Activated CD8-positive, alpha-beta memory T cell treated with anti-CD3 and anti-CD28 coated beads, Interleukin-2, amount 10 ng/mL, durations not matched to agents 7 days and 5 days (primary cell): ENCODE measurements at regions of chr2 and their contacts with region 1.

Region 1: GRCh38 chr2:69724540-69725159 is 17.3 kb upstream of the ANXA4 start:
- DNase-seq: peak; percentile 90
- ATAC-seq: peak; percentile 95
- H3K4me3 Mint-ChIP-seq: peak overlapping the region; percentile 69
- H3K27ac Mint-ChIP-seq: no peak overlapping the region
- H3K4me1 Mint-ChIP-seq: peaks cover 8% of the 10 kb centered on the region
- H3K27me3 Mint-ChIP-seq: peaks cover 3% of the 10 kb centered on the region

Region 2: DNA sequence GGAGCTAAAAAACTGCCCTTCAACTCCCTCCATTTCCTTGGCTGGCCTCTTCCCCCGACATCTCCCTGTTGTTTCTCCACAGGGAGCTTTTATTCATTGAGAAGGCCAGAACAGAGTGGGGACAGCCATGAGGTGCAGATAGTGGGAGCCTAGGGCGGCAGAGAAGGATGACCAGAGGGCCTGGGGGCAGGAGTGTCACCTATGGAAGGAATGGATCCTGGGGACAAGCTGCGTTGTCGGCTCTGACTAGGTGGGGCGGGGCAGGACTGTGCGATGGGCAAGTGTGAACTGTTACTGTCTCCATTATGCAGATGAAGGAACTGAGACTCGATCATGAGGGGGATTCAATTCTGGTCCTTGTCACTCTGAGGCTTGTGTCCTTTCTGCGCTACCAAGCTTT is 26.3 kb before region 1 on chr2:
- CTCF ChIA-PET with region 1: interaction called, 10 read pairs
- DNase-seq: no peak
- ATAC-seq: no peak
- H3K4me3 Mint-ChIP-seq: no peak overlapping the region
- H3K27ac Mint-ChIP-seq: no peak overlapping the region
- H3K4me1 Mint-ChIP-seq: peaks cover 26% of the 10 kb centered on the region
- H3K27me3 Mint-ChIP-seq: no peaks in the 10 kb centered on the region

Region 3: GRCh38 chr2:69798909-69799526 is 74.4 kb after region 1 on chr2:
- CTCF ChIA-PET with region 1: interaction called, 27 read pairs
- DNase-seq: no peak
- ATAC-seq: no peak
- H3K4me3 Mint-ChIP-seq: peak overlapping the region; percentile 37
- H3K27ac Mint-ChIP-seq: no peak overlapping the region
- H3K4me1 Mint-ChIP-seq: peaks cover 15% of the 10 kb centered on the region
- H3K27me3 Mint-ChIP-seq: no peaks in the 10 kb centered on the region

Region 4: DNA sequence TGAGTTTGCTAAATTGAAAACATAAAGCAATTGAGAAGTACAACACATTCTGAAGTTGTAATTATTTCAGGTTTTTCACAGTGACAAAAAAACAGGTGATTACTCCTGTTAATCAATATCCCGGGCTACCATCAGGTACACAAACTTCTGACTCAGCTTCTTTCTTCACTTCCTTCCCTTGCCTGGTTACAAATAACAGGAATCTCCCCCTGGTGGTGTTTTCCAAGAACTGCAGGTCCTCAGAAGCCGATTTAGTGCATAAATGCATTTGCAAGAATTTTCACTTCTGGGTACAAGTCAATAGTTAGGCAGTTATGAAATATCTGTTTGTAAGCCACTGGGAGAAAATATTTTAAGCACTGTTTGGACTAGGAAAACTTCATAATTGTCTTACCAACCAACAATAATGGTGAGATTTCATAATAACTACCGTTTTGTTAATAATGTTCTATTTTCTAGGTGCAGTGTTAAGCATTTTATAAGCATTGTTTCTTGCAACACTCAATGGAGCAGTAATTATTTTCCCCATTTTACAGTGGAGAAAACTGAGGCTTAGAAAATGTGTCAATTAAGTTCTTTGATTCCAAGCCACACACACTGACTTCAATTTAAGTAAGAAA is 92.4 kb after region 1 on chr2:
- CTCF ChIA-PET with region 1: interaction called, 248 read pairs
- DNase-seq: peak; percentile 89
- ATAC-seq: peak; percentile 80
- H3K4me3 Mint-ChIP-seq: no peak overlapping the region
- H3K27ac Mint-ChIP-seq: peak overlapping the region; percentile 17
- H3K4me1 Mint-ChIP-seq: peaks cover 10% of the 10 kb centered on the region
- H3K27me3 Mint-ChIP-seq: no peaks in the 10 kb centered on the region

Region 5: DNA sequence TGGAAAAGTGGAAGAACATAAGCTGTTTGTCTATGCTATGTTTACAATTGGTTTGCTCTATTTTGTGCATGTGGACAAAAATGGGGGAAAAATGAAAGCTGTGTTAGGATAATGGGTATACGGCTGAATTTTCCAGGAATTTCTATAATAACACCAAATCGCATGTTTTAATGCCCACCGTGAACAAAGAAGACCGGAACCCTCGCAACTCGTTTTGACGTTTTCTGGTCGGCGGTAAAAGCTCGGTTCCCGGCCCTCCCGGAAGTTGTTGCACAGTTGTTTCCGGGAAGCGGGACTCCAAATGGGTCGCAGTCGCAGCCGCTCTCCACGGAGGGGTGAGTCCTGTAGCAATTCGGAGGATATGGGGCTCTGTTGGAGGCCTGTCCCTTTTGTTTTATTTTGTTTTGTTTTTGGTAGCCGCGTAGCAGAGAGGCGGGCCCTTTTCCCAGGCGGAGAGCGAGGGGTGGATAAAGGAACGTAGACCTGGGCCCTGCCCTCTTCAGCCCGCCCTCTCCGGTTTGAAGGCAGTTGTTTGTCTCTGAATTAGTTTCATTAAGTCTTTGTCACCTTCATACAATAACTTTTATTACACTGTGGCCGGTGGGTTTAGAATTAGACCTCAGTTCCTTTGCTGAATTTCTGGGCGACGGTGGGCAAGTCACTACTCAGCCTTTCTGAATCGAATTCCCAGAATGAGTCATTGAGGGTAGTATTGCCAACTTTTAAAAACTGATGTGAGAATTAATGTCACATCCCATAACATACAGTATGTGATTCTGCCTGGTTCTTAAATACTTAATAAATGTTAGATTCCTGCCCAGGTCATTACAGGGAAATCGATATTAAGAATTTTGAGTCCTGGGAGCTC is 169.3 kb after region 1 on chr2 and contains the start of gene SNRNP27:
- CTCF ChIA-PET with region 1: interaction called, 13 read pairs
- DNase-seq: peak; percentile 88
- ATAC-seq: peak; percentile 85
- H3K4me3 Mint-ChIP-seq: peak within 1 kb of the TSS; percentile 97
- H3K27ac Mint-ChIP-seq: peak within 1 kb of the TSS; percentile 97
- H3K4me1 Mint-ChIP-seq: peaks cover 42% of the 10 kb centered on the region
- H3K27me3 Mint-ChIP-seq: no peaks in the 10 kb centered on the region
- total RNA-seq, gene SNRNP27: 54.6 to 60.0 TPM